SK-N-SH (cell line): ENCODE measurements at regions of chr3 and their contacts with region 1.

Region 1: DNA sequence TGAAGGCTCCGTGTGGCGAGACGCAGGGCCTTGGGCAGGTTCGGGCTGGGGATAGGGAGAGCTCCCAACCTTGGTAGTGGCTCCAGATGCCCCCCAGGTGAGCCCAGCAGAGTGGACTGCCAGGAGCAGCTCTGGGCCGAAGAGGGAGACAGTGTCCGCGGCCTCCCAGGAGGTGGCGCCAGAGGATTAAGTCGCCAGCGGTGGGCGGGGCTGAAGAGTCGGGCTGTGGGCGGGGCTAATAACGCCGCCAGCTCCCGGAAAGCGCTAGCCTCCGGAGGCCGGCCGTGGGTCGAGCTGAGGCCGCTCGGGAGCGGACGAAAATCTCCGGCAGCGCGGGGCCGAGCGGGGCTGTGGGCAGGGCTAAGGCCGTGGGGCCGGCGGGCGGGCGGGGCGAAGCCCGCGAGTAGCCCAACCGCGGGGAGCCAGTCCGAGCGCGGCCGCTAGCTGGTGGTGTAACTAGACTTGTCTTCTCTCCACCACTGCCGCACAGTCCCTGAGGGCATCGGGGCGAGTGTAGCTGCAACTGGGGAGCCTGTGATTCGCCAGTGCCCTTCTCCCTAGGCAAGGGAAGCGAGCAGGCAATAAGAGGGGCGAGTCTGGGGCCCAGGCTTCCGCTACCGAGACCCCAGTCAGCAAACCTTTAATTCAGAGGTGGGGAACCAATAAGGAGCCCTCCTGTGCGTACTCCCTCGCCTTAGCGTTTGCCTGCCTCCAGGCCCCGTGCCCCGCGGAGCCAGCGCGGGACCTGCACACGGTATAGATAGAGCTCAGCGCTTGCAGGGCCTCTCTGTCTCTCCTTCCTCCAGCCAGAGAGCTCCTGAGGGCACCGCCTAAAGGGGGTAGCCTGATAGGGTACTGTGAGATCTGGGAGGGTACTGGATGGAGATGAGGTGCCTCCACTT is 14.4 kb upstream of the BSN start:
- DNase-seq: peak; percentile 97
- H3K4me3 ChIP-seq: peak overlapping the region; percentile 51 to 67
- H3K27ac ChIP-seq: peak overlapping the region; percentile 39 to 91; a peak in 3 of 4 replicates
- H3K4me1 ChIP-seq: peaks cover 0 to 17% of the 10 kb centered on the region in 2 experiments; a peak in 2 of 4 replicates
- H3K27me3 ChIP-seq: peaks cover 1% of the 10 kb centered on the region; the same call in 1 of the 2 replicates
- CTCF ChIP-seq: peak; percentile 87
- EP300 ChIP-seq: no peak
- RAD21 ChIP-seq: peak; percentile 94

Region 2: GRCh38 chr3:49519296-49519695 is 20.6 kb before region 1 on chr3:
- CTCF ChIA-PET with region 1: interaction called, 16 read pairs
- POLR2A ChIA-PET with region 1: interaction called, 3 read pairs
- DNase-seq: no peak
- H3K4me3 ChIP-seq: no peak overlapping the region
- H3K27ac ChIP-seq: no peak overlapping the region
- H3K4me1 ChIP-seq: peaks cover 0 to 4% of the 10 kb centered on the region in 2 experiments; a peak in 1 of 4 replicates
- H3K27me3 ChIP-seq: no peaks in the 10 kb centered on the region
- CTCF ChIP-seq: no peak
- EP300 ChIP-seq: no peak
- RAD21 ChIP-seq: no peak

Region 3: DNA sequence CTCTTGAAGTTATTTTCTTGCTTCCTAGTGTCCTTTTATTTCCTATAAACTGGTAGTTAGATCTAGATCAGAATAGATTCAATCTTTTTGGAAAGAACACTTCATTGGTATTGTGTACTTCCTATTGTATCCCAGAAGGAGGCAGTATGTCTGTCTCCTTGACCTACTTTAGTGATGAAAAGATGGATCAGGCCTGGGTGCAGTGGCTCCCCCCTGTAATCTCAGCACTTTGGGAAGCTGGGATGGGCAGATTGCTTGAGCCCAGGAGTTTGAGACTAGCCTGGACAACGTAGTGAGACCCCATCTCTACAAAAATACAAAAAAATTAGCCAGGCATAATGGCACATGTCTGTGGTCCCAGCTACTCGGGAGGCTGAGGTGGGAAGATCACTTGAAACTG is 26.4 kb after region 1 on chr3:
- CTCF ChIA-PET with region 1: interaction called, 14 read pairs
- POLR2A ChIA-PET with region 1: interaction called, 3 read pairs
- DNase-seq: no peak
- H3K4me3 ChIP-seq: no peak overlapping the region
- H3K27ac ChIP-seq: no peak overlapping the region
- H3K4me1 ChIP-seq: no peaks in the 10 kb centered on the region; a peak in 1 of 4 replicates
- H3K27me3 ChIP-seq: peaks cover 8% of the 10 kb centered on the region
- CTCF ChIP-seq: peak; percentile 46; the same call in 1 of the 2 replicates
- EP300 ChIP-seq: no peak
- RAD21 ChIP-seq: no peak

Region 4: GRCh38 chr3:49638445-49638844 is 98.5 kb after region 1 on chr3:
- CTCF ChIA-PET with region 1: interaction called, 11 read pairs
- POLR2A ChIA-PET with region 1: no interaction called
- DNase-seq: no peak
- H3K4me3 ChIP-seq: no peak overlapping the region
- H3K27ac ChIP-seq: no peak overlapping the region
- H3K4me1 ChIP-seq: no peaks in the 10 kb centered on the region
- H3K27me3 ChIP-seq: no peaks in the 10 kb centered on the region
- CTCF ChIP-seq: no peak
- EP300 ChIP-seq: no peak
- RAD21 ChIP-seq: no peak

Region 5: GRCh38 chr3:49656541-49657112 is 116.7 kb after region 1 on chr3:
- CTCF ChIA-PET with region 1: interaction called, 15 read pairs
- POLR2A ChIA-PET with region 1: no interaction called
- DNase-seq: no peak
- H3K4me3 ChIP-seq: no peak overlapping the region
- H3K27ac ChIP-seq: no peak overlapping the region
- H3K4me1 ChIP-seq: no peaks in the 10 kb centered on the region
- H3K27me3 ChIP-seq: no peaks in the 10 kb centered on the region
- CTCF ChIP-seq: no peak
- EP300 ChIP-seq: no peak
- RAD21 ChIP-seq: no peak

Region 6: GRCh38 chr3:49673715-49674496 is 134.0 kb after region 1 on chr3 and contains the start of gene APEH:
- CTCF ChIA-PET with region 1: interaction called, 299 read pairs
- POLR2A ChIA-PET with region 1: interaction called, 21 read pairs
- DNase-seq: peak; percentile 99
- H3K4me3 ChIP-seq: peak within 1 kb of the TSS; percentile 83 to 90
- H3K27ac ChIP-seq: peak within 1 kb of the TSS; percentile 83 to 90
- H3K4me1 ChIP-seq: peaks cover 7 to 19% of the 10 kb centered on the region in 2 experiments; a peak in 1 of 4 replicates
- H3K27me3 ChIP-seq: no peaks in the 10 kb centered on the region
- CTCF ChIP-seq: no peak; the same call in 1 of the 2 replicates
- EP300 ChIP-seq: no peak
- RAD21 ChIP-seq: no peak
- polyA plus RNA-seq, gene APEH: 112 and 122 TPM in 2 replicates

Region 7: GRCh38 chr3:49723628-49724551 is 184.0 kb after region 1 on chr3 and contains the start of gene GMPPB:
- CTCF ChIA-PET with region 1: interaction called, 24 read pairs
- POLR2A ChIA-PET with region 1: interaction called, 8 read pairs
- DNase-seq: peak; percentile 98
- H3K4me3 ChIP-seq: peak within 1 kb of the TSS; percentile 98 to 99
- H3K27ac ChIP-seq: peak within 1 kb of the TSS; percentile 81 to 87
- H3K4me1 ChIP-seq: peaks cover 8 to 23% of the 10 kb centered on the region in 2 experiments; a peak in 2 of 4 replicates
- H3K27me3 ChIP-seq: no peaks in the 10 kb centered on the region
- CTCF ChIP-seq: no peak
- EP300 ChIP-seq: 0 out of 4 replicates have a peak, but pooled peaks of 1 of the 2 experiments have one; percentile 15
- RAD21 ChIP-seq: no peak
- polyA plus RNA-seq, gene GMPPB: 25.1 and 28.3 TPM in 2 replicates

Region 8: DNA sequence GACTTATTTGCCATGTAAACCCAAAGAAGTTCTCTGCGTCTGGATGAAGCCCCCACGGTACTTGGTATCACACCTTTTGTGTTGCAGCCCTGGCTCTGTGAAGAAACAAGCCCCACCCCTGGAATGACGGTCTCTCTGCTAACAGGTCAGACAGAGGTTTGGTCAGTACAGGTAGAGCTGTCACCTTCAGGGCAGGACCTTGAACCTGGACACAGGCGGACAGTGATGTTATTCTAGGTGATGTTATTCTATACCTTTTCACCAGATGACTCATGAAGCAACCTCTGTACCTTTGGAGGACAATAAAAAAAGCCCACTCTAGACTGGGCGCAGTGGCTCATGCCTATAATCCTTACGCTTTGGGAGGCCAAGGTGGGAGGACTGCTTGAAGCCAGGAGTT is 194.8 kb after region 1 on chr3:
- CTCF ChIA-PET with region 1: no interaction called
- POLR2A ChIA-PET with region 1: no interaction called
- DNase-seq: no peak
- H3K4me3 ChIP-seq: no peak overlapping the region
- H3K27ac ChIP-seq: no peak overlapping the region
- H3K4me1 ChIP-seq: no peaks in the 10 kb centered on the region
- H3K27me3 ChIP-seq: no peaks in the 10 kb centered on the region
- CTCF ChIP-seq: no peak
- EP300 ChIP-seq: no peak
- RAD21 ChIP-seq: no peak

Region 9: DNA sequence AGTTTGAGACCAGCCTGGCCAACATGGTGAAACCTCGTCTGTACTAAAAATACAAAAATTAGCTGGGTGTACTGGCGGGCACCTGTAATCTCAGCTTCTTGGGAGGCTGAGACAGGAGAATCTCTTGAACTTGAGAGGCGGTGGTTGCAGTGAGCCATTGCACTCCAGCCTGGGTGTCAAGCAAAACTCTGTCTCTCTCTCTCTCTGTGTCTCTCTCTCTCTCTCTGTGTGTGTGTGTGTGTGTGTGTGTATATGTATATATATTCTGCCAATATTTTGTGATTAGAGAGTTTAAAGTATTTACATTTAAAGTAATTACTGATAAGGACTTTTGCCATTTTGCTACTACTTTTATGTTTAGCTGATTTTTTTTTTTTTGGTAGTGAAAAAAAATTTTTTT is 415.7 kb after region 1 on chr3:
- CTCF ChIA-PET with region 1: no interaction called
- POLR2A ChIA-PET with region 1: no interaction called
- DNase-seq: no peak
- H3K4me3 ChIP-seq: no peak overlapping the region
- H3K27ac ChIP-seq: no peak overlapping the region
- H3K4me1 ChIP-seq: no peaks in the 10 kb centered on the region
- H3K27me3 ChIP-seq: no peaks in the 10 kb centered on the region
- CTCF ChIP-seq: no peak
- EP300 ChIP-seq: no peak
- RAD21 ChIP-seq: no peak